GM23248 (cell line): ENCODE measurements at regions of chr10 and their contacts with region 1.

Region 1: DNA sequence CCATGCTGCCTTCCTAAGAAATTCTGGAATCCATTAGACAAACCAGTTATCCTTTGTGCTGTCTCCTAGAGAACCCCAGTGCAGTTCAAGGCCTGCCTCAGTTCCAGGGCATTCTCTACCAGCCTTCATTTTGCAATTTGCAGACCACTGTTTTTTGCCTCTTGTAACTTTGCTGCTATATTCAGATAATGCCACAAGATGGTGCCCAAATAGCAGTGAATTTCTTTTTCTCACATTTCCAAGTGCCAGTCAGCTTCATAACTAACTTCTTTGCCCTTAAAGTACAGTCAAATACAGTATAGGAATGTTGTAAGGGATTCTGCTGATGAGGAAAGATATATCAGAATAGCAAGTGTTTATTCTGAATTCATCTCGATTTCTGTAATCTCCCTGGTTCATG is 25.2 kb downstream of the LOXL4 start:
- DNase-seq: peak; percentile 51
- H3K4me3 ChIP-seq: no peak overlapping the region
- H3K27ac ChIP-seq: no peak overlapping the region
- H3K4me1 ChIP-seq: peaks cover 6% of the 10 kb centered on the region; the same call in 1 of the 2 replicates
- H3K27me3 ChIP-seq: no peaks in the 10 kb centered on the region

Region 2: GRCh38 chr10:97170326-97170725 is 1072.5 kb before region 1 on chr10:
- in situ Hi-C with region 1: no loop called
- DNase-seq: no peak
- H3K4me3 ChIP-seq: no peak overlapping the region
- H3K27ac ChIP-seq: no peak overlapping the region
- H3K4me1 ChIP-seq: no peaks in the 10 kb centered on the region
- H3K27me3 ChIP-seq: no peaks in the 10 kb centered on the region; the same call in none of the 2 replicates

Region 3: GRCh38 chr10:98107644-98108430 is 135.0 kb before region 1 on chr10:
- in situ Hi-C with region 1: no loop called
- DNase-seq: no peak
- H3K4me3 ChIP-seq: no peak overlapping the region
- H3K27ac ChIP-seq: no peak overlapping the region
- H3K4me1 ChIP-seq: no peaks in the 10 kb centered on the region
- H3K27me3 ChIP-seq: peaks cover 11% of the 10 kb centered on the region; the same call in 1 of the 2 replicates

Region 4: DNA sequence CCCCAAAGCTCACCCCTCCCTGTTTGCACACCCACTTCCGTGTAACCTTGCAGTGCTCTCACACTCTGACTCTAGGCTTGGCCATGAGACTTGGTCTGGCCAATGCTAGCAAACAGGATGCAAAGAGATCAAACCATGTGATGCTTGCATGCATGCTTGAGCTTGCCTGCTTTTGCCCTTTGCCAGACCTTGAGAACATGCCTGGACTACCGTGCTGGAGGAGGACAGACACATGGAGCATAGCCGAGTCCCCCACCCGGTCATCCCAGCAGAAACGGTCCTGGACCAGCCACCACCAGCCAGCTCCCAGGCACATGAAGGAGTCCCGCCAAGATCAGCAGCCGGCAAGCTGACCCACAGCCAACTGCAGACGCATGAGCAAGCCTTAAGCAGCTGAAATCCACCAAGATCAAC is 148.8 kb after region 1 on chr10:
- in situ Hi-C with region 1: loop called (anchors 10 kb)
- DNase-seq: peak; percentile 73
- H3K4me3 ChIP-seq: no peak overlapping the region
- H3K27ac ChIP-seq: no peak overlapping the region
- H3K4me1 ChIP-seq: peaks cover 19% of the 10 kb centered on the region; the same call in 1 of the 2 replicates
- H3K27me3 ChIP-seq: no peaks in the 10 kb centered on the region